ENCODE measurements at regions of chr4 and their contacts with region 1.

Region 1: DNA sequence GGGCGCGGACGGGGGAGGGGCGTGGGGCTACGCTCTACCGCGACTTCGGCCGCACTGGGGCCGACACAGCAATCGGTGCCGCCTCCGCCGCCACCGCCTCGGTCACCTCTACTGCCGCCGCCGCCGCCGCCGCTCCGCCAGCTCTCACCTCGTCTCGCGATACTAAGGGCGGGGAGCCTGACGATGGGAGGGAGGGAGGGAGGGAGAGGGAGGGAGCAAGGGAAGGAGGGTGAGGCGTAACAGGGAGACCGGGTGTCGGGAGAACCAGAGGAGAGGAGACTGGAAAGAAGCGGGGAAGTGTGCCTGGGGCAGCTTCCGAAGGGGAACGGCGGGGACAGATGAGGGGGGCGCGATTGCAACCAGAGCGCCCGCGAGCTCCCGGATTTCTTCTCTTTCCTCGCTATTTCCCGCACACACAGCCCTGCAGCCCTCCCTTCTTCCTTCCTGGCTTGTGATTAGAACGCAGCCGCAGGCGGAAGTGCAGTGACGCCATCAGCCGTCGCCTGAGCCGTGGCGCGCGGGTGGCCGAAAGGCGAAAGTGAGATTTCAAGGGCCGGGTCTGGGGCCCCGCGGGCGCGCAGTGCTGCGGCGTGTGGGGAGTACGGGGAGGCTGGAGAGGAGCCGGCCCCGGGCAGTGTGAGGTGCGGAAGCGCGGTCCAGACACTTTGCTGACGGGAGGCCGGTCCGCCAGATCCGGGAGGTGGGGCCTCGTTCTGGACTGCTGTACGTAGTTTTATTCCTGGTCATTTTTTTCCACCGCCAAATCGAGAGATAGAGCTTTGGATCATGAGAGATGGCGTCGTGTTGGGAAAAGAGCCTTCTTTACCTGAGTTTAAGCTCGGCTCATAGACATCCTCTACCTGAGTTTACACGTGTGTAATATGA is at the start of gene ANKRD17:
- DNase-seq: peak; percentile 90 to 92 (median 92)
- H3K4me3 ChIP-seq: peak within 1 kb of the TSS; percentile 84 to 92
- H3K4me3 Mint-ChIP-seq: peak within 1 kb of the TSS; percentile 99 to 100 (median 100)
- H3K27ac ChIP-seq: peak within 1 kb of the TSS; percentile 94
- H3K27ac Mint-ChIP-seq: peak within 1 kb of the TSS; percentile 100
- H3K4me1 ChIP-seq: peaks cover 51% of the 10 kb centered on the region
- H3K4me1 Mint-ChIP-seq: peaks cover 37 to 81% (median 54%) of the 10 kb centered on the region in 4 donors
- H3K27me3 ChIP-seq: no peaks in the 10 kb centered on the region
- H3K27me3 Mint-ChIP-seq: no peaks in the 10 kb centered on the region
- total RNA-seq, gene ANKRD17: 58.4 to 58.7 TPM

Region 2: GRCh38 chr4:73036123-73036522 is 222.8 kb before region 1 on chr4:
- CTCF ChIA-PET with region 1: interaction called, 4 read pairs
- POLR2A ChIA-PET with region 1: no interaction called
- intact Hi-C with region 1: loop called (anchors 1 kb)
- DNase-seq: no peak
- H3K4me3 ChIP-seq: no peak overlapping the region
- H3K4me3 Mint-ChIP-seq: no peak overlapping the region
- H3K27ac ChIP-seq: no peak overlapping the region
- H3K27ac Mint-ChIP-seq: no peak overlapping the region
- H3K4me1 ChIP-seq: no peaks in the 10 kb centered on the region
- H3K4me1 Mint-ChIP-seq: peaks cover 0 to 11% (median 3%) of the 10 kb centered on the region in 4 donors
- H3K27me3 ChIP-seq: no peaks in the 10 kb centered on the region
- H3K27me3 Mint-ChIP-seq: peaks cover 3 to 7% of the 10 kb centered on the region in 2 donors

Region 3: DNA sequence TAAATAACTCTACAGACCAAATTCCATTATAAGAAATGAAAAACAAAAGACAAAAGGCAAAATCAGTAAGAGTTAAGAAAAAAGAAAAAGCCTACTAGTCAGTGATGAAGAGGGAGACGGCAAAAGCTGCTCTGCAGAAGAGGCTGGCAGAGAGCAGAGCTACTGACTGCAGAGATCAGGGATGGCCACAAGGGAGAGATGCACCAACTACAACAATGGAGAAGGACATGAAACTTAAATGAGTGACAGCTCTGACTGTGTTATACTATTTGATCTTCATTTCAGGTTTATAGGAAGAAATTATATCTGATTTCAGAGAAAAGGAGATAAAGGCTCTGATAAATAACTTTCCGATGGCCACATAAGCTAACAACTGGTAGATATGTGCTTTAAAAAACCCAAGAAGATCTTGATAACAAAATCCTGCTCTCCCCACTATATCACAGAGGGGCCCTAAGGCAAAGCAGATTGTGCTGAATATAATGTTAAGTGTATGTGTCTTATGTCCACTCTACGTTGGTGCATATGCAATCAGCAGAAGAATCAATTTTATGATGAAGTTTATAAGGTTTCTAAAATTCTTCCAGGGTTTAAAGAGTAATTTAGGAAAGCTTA is 131.0 kb before region 1 on chr4:
- CTCF ChIA-PET with region 1: interaction called, 12 read pairs
- POLR2A ChIA-PET with region 1: interaction called, 4 read pairs
- intact Hi-C with region 1: loop called (anchors 1 kb)
- DNase-seq: peak; percentile 6 to 25 (median 9)
- H3K4me3 ChIP-seq: no peak overlapping the region
- H3K4me3 Mint-ChIP-seq: no peak overlapping the region
- H3K27ac ChIP-seq: no peak overlapping the region
- H3K27ac Mint-ChIP-seq: peak overlapping the region in 2 of 7 donors; percentile 9 to 15
- H3K4me1 ChIP-seq: no peaks in the 10 kb centered on the region
- H3K4me1 Mint-ChIP-seq: peaks cover 0 to 11% (median 5%) of the 10 kb centered on the region in 4 donors
- H3K27me3 ChIP-seq: no peaks in the 10 kb centered on the region
- H3K27me3 Mint-ChIP-seq: no peaks in the 10 kb centered on the region

Region 4: DNA sequence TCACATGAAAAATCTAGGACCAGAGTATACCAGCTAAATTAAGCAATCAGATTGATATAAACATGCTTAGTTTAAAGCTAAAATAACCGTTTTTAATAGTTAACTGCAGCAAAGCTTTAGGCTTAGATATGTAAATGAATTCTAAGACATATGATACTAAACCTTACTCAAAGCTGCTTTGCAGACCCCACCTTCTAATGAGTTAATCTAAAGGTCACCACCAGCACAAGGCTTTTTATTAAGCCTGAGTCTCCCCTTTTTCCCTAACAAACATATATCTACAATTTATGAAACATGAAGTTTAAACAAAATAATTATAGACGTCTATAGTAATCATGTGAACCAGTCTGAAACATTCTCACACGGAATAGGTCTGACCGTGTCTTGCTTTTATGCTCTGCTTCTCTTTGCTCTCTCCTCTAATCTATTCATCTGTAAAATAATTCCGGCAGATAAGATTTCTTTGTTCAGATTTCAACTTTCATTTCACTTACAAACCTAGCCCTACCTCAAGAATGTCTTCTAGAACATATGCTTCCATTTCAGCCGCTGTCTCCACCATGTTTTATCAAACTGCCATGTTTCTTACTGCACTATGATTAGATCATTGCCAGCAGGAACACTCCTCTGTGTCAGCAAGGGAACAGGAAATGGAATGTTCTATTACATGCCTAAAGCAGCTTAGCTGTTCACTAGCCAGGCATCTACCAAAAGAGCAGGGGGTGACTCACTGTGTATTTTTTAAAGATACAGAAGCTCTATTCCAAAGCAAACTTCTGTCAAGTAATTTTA is 36.3 kb before region 1 on chr4:
- CTCF ChIA-PET with region 1: interaction called, 7 read pairs
- POLR2A ChIA-PET with region 1: interaction called, 38 read pairs
- intact Hi-C with region 1: loop called (anchors 1 kb)
- DNase-seq: peak; percentile 77 to 88 (median 85)
- H3K4me3 ChIP-seq: peak overlapping the region; percentile 54 to 91
- H3K4me3 Mint-ChIP-seq: no peak overlapping the region
- H3K27ac ChIP-seq: peak overlapping the region; percentile 89
- H3K27ac Mint-ChIP-seq: no peak overlapping the region
- H3K4me1 ChIP-seq: peaks cover 50% of the 10 kb centered on the region
- H3K4me1 Mint-ChIP-seq: peaks cover 24 to 49% (median 30%) of the 10 kb centered on the region in 4 donors
- H3K27me3 ChIP-seq: no peaks in the 10 kb centered on the region
- H3K27me3 Mint-ChIP-seq: no peaks in the 10 kb centered on the region

Region 5: DNA sequence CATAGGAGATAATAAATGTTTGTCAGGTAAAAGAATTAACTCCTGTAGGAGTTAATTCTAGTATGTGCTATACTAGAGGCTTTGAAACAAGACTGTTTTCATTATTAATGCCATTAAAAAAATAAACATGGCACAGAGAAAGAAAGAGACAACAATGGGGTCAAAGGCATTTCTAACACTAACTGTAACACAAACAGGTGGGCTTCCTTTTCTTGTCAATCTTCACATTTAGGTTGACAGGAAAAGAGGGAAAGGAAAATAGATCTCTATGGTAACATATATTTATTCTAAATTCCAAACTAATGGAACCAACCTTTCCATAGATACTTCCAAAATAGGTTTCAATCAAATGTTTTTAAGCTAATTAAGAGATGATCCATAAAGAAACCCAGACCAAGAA is 10.1 kb before region 1 on chr4:
- CTCF ChIA-PET with region 1: interaction called, 13 read pairs
- POLR2A ChIA-PET with region 1: interaction called, 6 read pairs
- intact Hi-C with region 1: no loop called
- DNase-seq: no peak
- H3K4me3 ChIP-seq: no peak overlapping the region
- H3K4me3 Mint-ChIP-seq: peak overlapping the region in 1 of 8 donors; percentile 23
- H3K27ac ChIP-seq: no peak overlapping the region
- H3K27ac Mint-ChIP-seq: no peak overlapping the region
- H3K4me1 ChIP-seq: peaks cover 54% of the 10 kb centered on the region
- H3K4me1 Mint-ChIP-seq: peaks cover 47 to 76% (median 59%) of the 10 kb centered on the region in 4 donors
- H3K27me3 ChIP-seq: no peaks in the 10 kb centered on the region
- H3K27me3 Mint-ChIP-seq: no peaks in the 10 kb centered on the region

Region 6: DNA sequence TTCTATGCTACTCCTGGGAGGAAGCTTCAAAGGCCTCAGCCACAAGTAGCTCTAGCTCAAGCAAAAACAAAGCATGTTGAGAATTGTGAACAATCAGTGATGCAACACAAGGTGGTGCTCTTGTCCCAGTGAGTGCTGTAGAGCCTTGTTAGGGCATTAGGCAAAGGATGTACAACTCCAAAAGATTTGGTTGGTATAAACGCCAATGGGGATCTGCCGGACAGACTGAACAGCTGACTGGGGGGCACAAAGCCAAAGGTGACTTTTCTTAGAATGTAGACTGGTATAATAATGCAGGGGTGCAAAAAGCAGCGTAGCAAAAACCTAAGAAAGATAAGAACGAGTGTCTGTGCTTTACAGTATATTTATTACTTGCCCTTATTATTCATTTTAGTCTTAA is 82.5 kb after region 1 on chr4:
- CTCF ChIA-PET with region 1: no interaction called
- POLR2A ChIA-PET with region 1: no interaction called
- intact Hi-C with region 1: no loop called
- DNase-seq: no peak
- H3K4me3 ChIP-seq: no peak overlapping the region
- H3K4me3 Mint-ChIP-seq: no peak overlapping the region
- H3K27ac ChIP-seq: no peak overlapping the region
- H3K27ac Mint-ChIP-seq: no peak overlapping the region
- H3K4me1 ChIP-seq: no peaks in the 10 kb centered on the region
- H3K4me1 Mint-ChIP-seq: no peaks in the 10 kb centered on the region
- H3K27me3 ChIP-seq: no peaks in the 10 kb centered on the region
- H3K27me3 Mint-ChIP-seq: peaks cover 0 to 10% of the 10 kb centered on the region in 2 donors

Region 7: GRCh38 chr4:73770917-73771316 is 512.0 kb after region 1 on chr4:
- CTCF ChIA-PET with region 1: no interaction called
- POLR2A ChIA-PET with region 1: no interaction called
- intact Hi-C with region 1: no loop called
- DNase-seq: no peak
- H3K4me3 ChIP-seq: no peak overlapping the region
- H3K4me3 Mint-ChIP-seq: no peak overlapping the region
- H3K27ac ChIP-seq: no peak overlapping the region
- H3K27ac Mint-ChIP-seq: no peak overlapping the region
- H3K4me1 ChIP-seq: no peaks in the 10 kb centered on the region
- H3K4me1 Mint-ChIP-seq: no peaks in the 10 kb centered on the region
- H3K27me3 ChIP-seq: no peaks in the 10 kb centered on the region
- H3K27me3 Mint-ChIP-seq: no peaks in the 10 kb centered on the region

Measured in CD4-positive, alpha-beta memory T cell (primary cell).